A549 (cell line): ENCODE measurements at regions of chr18 and their contacts with region 1.

Region 1: GRCh38 chr18:12038639-12039417 is 54.8 kb upstream of the ANKRD62 start:
- DNase-seq: peak; percentile 64 to 84
- ATAC-seq: peak; percentile 87 to 95
- H3K4me3 ChIP-seq: peak overlapping the region; percentile 52
- H3K27ac ChIP-seq: peak overlapping the region; percentile 78 to 93
- H3K4me1 ChIP-seq: peaks cover 23% of the 10 kb centered on the region
- CTCF ChIP-seq: peak; percentile 84
- EP300 ChIP-seq: no peak
- POLR2A ChIP-seq: no peak
- RAD21 ChIP-seq: peak; percentile 84 to 93

Region 2: DNA sequence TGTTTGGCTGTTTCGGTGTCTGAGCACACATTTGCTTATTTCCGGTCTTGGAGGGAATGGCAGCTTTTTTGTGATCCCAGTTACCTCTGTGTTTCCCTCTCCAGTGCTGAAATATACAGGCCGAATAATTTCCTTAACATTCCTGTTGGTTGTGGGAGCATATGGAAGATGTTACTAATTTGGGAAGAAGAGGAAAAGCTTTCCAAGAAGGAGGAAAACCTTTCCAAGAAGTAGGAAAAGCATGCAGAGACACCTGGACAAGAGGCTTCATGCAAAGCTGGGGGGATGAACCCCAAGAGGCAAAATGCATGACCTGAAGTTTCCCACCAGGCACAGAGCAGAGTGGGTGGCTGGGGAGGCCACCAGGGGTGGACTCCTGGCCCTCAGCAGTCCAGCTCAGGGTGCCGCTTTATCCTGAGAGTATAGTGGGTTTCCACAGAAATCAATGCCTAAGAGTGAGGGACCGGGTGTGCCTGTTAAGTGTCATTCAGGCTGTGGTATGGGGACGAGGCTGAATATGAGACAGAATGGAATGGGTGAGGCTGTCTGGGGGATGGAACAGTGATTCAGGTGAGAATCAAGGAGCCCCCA is 375.3 kb before region 1 on chr18:
- CTCF ChIA-PET with region 1: interaction called, 10 read pairs
- POLR2A ChIA-PET with region 1: no interaction called
- DNase-seq: no peak
- ATAC-seq: no peak
- H3K4me3 ChIP-seq: no peak overlapping the region
- H3K27ac ChIP-seq: no peak overlapping the region
- H3K4me1 ChIP-seq: no peaks in the 10 kb centered on the region
- CTCF ChIP-seq: no peak
- EP300 ChIP-seq: no peak
- POLR2A ChIP-seq: no peak
- RAD21 ChIP-seq: no peak

Region 3: GRCh38 chr18:11932393-11932792 is 106.4 kb before region 1 on chr18:
- CTCF ChIA-PET with region 1: interaction called, 39 read pairs
- POLR2A ChIA-PET with region 1: no interaction called
- DNase-seq: no peak
- ATAC-seq: no peak
- H3K4me3 ChIP-seq: no peak overlapping the region
- H3K27ac ChIP-seq: no peak overlapping the region
- H3K4me1 ChIP-seq: no peaks in the 10 kb centered on the region
- CTCF ChIP-seq: no peak
- EP300 ChIP-seq: no peak
- POLR2A ChIP-seq: no peak
- RAD21 ChIP-seq: no peak

Region 4: DNA sequence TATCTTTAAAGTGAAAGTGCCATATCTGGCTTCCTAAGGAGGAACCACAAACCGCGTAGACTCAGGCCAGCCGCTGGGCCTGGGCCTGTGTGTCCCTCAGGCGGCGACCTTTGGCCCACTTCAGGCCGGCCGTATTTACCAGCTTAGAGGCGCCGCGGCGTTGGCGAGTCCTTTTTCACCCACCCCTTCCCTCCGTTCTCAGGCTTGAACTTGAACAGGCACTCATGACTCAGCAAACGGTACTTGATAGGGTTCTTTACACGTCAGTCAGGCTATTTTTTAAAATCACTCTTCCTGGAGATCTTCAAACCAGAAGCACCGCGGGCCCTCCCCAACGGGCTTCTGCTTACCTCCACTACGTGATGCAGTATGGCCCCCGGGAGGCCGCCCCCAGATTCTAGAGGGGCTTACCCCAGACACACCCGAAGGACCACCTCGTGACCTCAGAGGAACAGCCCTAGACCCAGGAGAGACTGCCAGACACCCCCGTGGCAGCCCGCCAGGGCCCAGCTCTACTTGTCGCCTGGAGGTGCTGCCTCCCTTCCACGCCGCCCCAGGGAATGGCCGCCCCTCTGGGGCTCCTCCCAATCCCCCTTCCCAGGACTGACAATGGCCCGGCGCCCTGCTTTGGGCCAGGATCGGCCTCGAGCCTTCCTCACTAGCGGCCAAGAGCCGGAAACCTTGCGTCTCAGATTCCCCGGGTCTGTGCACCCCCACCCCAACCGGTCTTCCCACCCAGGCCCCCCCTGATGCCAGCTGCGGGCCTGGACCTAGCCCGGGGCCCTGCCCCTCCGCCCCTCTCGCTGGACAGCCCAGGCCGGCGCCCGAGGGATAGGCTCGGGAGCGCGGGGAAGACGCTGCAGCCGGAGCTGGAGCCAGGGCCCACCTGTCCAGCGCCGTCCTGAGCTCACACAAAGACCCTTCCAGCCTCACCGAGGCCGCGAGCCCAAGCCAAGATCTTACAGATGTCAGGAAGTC is 91.3 kb before region 1 on chr18:
- CTCF ChIA-PET with region 1: interaction called, 11 read pairs
- POLR2A ChIA-PET with region 1: no interaction called
- DNase-seq: peak in 1 of 2 experiments; percentile 98
- ATAC-seq: peak; percentile 91
- H3K4me3 ChIP-seq: peak overlapping the region; percentile 49
- H3K27ac ChIP-seq: peak overlapping the region; percentile 98 to 100
- H3K4me1 ChIP-seq: peaks cover 35% of the 10 kb centered on the region
- CTCF ChIP-seq: no peak
- EP300 ChIP-seq: no peak
- POLR2A ChIP-seq: no peak; the same call in 1 of the 2 replicates
- RAD21 ChIP-seq: peak in 1 of 2 experiments; percentile 1; a peak in 1 of 5 replicates

Region 5: GRCh38 chr18:11995445-11996189 is 43.2 kb before region 1 on chr18:
- CTCF ChIA-PET with region 1: interaction called, 39 read pairs
- POLR2A ChIA-PET with region 1: no interaction called
- DNase-seq: peak; percentile 63 to 77
- ATAC-seq: peak; percentile 85 to 86
- H3K4me3 ChIP-seq: peak overlapping the region; percentile 24; the same call in 2 of the 3 replicates
- H3K27ac ChIP-seq: peak overlapping the region; percentile 85 to 96
- H3K4me1 ChIP-seq: peaks cover 44% of the 10 kb centered on the region
- CTCF ChIP-seq: peak; percentile 77
- EP300 ChIP-seq: no peak
- POLR2A ChIP-seq: no peak
- RAD21 ChIP-seq: peak; percentile 88 to 89

Region 6: DNA sequence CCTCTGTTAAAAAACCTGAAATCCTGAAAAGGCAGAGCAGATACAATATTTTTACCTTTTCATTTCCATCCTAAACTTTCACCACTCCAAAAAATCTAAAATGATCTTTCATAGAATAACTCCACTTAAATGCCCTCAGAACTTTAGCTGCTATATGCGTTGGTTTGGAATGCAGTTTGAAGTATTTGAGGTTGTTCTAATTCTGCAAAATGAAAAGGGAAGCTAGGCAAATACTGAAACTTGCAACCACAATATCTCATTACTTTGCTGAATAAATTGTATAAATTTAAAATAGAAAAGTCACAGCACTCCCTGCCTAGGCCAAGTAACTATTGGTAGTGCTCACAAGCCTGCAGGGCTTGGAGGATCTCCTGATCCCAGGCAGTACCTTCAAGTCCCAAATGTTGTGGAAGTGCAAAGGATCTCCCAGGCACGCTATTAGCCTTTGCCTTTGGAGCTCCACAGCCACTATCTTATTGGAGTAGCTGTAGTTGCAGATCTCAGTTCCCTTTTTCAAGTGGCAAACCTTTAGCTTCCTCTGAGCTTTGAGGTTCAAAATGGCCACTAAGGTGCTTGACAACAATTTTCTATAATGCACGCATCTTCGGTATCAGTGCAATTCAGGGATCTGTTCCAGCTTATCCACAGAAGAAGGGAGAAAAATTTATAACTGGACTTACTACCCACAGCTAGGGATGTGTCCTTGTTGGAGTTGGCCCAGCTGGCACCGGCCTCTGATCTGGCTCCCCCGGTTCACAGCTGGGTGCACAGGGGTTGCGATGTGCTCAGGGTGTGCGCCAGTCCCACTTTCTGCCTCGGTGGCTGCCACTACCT is 11.4 kb after region 1 on chr18:
- CTCF ChIA-PET with region 1: interaction called, 16 read pairs
- POLR2A ChIA-PET with region 1: no interaction called
- DNase-seq: no peak
- ATAC-seq: no peak
- H3K4me3 ChIP-seq: no peak overlapping the region
- H3K27ac ChIP-seq: no peak overlapping the region
- H3K4me1 ChIP-seq: no peaks in the 10 kb centered on the region
- CTCF ChIP-seq: no peak
- EP300 ChIP-seq: no peak
- POLR2A ChIP-seq: no peak
- RAD21 ChIP-seq: no peak

Region 7: GRCh38 chr18:12593866-12594265 is 555.0 kb after region 1 on chr18:
- CTCF ChIA-PET with region 1: no interaction called
- POLR2A ChIA-PET with region 1: no interaction called
- DNase-seq: no peak
- ATAC-seq: no peak
- H3K4me3 ChIP-seq: no peak overlapping the region
- H3K27ac ChIP-seq: no peak overlapping the region
- H3K4me1 ChIP-seq: peaks cover 39% of the 10 kb centered on the region
- CTCF ChIP-seq: no peak
- EP300 ChIP-seq: no peak
- POLR2A ChIP-seq: no peak
- RAD21 ChIP-seq: no peak